B cell (primary cell): ENCODE measurements at regions of chr10 and their contacts with region 1.

Region 1: DNA sequence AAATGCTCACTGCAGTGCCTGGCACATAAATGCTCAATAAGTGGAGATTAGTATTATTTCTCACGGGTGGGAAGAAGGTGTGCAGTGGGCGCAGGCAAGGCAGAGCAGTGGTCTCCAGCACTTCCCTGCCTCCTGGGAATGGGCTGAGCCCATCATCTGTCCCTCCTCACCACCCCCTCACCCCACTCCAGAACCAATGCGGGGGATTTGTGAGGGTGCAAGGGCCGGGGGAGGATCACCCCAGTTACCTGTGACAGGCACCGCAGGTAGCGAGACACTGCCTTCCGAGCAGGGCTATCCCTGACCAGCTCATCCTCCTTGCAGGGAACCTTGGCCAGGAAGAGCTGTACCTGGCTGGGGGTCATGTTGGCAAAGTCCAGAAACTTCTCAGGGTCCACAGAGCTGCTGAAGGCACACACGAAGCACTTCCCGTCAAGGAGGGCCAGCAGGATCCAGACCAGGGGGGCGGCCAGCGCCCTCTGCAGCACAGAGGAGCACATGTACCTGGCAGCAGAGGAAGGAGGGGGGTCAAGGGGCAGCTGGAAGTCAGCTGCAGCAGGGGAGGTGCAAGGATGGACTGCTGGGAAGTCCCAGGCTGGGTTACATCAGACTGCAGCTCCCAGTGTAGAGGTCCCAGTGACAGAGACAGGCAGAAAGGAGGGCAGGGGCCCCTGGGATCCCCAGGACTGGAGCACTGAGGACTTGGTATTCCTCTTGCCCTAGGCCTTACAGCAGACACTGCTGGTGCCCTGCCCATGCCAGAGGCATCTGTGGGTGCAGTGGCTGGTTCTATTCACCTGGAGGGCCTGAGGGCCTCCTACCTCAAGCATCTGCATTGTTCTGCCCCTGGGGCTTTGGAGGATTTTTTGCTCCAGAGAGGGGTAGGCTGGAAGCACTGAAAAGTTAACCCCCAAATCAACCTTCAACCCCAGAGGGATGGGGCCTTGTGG is 2.7 kb downstream of the CALHM3 start:
- DNase-seq: peak; percentile 37
- ATAC-seq: no peak
- H3K4me3 ChIP-seq: no peak overlapping the region
- H3K4me3 Mint-ChIP-seq: no peak overlapping the region
- H3K27ac ChIP-seq: no peak overlapping the region
- H3K27ac Mint-ChIP-seq: no peak overlapping the region
- H3K4me1 ChIP-seq: peaks cover 19 to 34% of the 10 kb centered on the region in 2 donors
- H3K4me1 Mint-ChIP-seq: peaks cover 33% of the 10 kb centered on the region
- H3K27me3 ChIP-seq: no peaks in the 10 kb centered on the region
- H3K27me3 Mint-ChIP-seq: no peaks in the 10 kb centered on the region
- CTCF ChIP-seq: no peak

Region 2: DNA sequence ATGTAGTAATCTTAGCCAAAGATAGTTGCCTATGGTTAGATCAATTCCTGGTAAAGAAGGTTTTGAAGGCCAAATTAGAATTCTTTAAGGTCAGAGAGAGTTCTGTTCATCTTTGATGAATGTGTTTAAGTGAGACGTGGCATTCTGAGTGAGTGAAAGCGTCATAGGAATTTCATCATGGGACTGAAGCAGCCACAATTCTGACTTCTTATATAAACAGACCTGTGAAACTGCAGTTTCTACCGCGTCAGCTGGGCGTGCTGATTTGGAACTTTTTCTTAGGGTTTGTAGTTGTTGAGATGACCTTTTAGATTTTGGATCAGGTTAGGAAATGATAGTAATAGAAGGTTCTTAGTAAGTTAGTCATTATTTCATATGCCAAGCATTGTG is 454.4 kb before region 1 on chr10:
- CTCF ChIA-PET with region 1: no interaction called
- POLR2A ChIA-PET with region 1: no interaction called
- intact Hi-C with region 1: no loop called
- DNase-seq: no peak
- ATAC-seq: no peak
- H3K4me3 ChIP-seq: no peak overlapping the region
- H3K4me3 Mint-ChIP-seq: no peak overlapping the region
- H3K27ac ChIP-seq: no peak overlapping the region
- H3K27ac Mint-ChIP-seq: no peak overlapping the region
- H3K4me1 ChIP-seq: no peaks in the 10 kb centered on the region
- H3K4me1 Mint-ChIP-seq: peaks cover under 1% of the 10 kb centered on the region
- H3K27me3 ChIP-seq: no peaks in the 10 kb centered on the region
- H3K27me3 Mint-ChIP-seq: peaks cover 4% of the 10 kb centered on the region
- CTCF ChIP-seq: no peak

Region 3: DNA sequence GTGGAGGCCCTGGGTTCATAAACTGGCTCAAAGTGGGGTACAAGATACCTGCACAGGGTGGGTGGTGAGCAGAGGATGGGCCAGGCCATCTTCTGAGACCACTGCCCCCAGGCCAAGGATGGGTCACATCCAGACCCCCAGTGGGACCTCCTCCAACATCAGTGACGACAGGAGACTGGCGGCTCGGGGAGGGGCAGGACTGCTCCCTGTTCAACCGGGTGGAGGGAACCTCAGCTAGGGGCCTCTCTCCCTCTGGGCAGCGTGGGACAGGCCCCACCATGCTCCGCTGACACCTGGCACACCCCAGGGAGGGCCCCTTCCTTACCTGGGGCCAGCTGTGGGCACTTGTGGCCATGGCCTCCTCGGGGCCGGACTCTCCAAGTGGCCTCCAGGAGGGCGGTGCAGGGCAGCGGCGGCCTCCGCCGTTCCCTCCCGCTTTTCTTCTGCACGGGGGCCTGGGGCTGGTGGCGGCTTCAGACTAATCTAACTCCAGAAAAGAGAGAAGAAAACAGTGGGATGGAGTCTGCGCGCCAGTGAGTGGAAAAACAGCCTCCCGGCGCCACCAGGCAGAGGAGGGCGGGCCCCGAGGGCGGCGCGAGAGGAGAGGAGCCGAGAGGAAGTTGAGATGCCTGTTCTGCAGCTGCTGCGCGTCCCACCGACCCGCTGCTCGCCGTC is 24.4 kb before region 1 on chr10 and contains the start of gene CALHM2:
- CTCF ChIA-PET with region 1: interaction called, 32 read pairs
- POLR2A ChIA-PET with region 1: interaction called, 24 read pairs
- intact Hi-C with region 1: loop called (anchors 1 kb)
- DNase-seq: peak; percentile 65
- ATAC-seq: peak; percentile 86
- H3K4me3 ChIP-seq: peak within 1 kb of the TSS; percentile 22 to 91 (median 64)
- H3K4me3 Mint-ChIP-seq: peak within 1 kb of the TSS; percentile 93
- H3K27ac ChIP-seq: peak within 1 kb of the TSS; percentile 24 to 71
- H3K27ac Mint-ChIP-seq: peak within 1 kb of the TSS; percentile 91
- H3K4me1 ChIP-seq: peaks cover 20 to 39% of the 10 kb centered on the region in 2 donors
- H3K4me1 Mint-ChIP-seq: peaks cover 42% of the 10 kb centered on the region
- H3K27me3 ChIP-seq: peaks cover 0 to 6% (median 0%) of the 10 kb centered on the region in 4 experiments
- H3K27me3 Mint-ChIP-seq: no peaks in the 10 kb centered on the region
- CTCF ChIP-seq: no peak
- total RNA-seq, gene CALHM2: 42.8 and 46.2 TPM in 2 replicates

Region 4: DNA sequence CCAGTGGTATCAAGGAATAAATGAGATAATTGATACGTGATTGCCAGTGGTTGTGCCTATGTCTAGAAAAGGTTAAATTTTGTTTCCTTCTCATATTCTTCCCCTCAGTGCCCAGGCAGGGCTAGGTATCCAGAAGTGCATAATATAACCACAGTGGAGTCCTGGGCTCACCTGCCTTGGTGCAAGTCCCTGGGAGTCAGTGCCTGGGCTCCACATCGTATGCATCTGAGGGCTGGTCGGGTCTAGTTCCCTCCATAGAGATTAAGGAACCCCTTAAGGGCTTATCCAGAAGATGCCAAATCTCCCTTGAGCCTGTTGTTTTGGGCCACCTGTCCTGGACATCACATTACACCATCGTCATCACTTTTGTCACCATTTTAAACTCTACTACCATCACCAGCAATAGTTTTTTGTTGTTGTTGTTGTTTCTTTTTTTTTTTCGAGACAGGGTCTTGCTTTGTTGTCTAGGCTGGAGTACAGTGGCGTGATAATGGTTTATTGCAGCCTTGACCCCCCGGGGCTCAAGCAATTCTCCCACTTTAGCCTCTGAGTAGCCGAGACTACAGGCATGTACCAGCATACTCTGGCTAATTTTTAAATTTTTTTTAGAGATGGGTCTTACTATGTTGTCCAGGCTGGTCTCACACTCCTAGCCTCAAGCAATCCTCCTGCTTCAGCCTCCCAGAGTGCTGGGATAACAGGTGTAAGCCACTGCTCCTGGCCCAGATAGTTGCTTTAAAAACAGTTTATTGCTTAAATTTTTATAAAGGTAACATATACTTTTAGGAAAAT is 43.2 kb after region 1 on chr10:
- CTCF ChIA-PET with region 1: no interaction called
- POLR2A ChIA-PET with region 1: no interaction called
- intact Hi-C with region 1: no loop called
- DNase-seq: no peak
- ATAC-seq: no peak
- H3K4me3 ChIP-seq: no peak overlapping the region
- H3K4me3 Mint-ChIP-seq: no peak overlapping the region
- H3K27ac ChIP-seq: no peak overlapping the region
- H3K27ac Mint-ChIP-seq: no peak overlapping the region
- H3K4me1 ChIP-seq: peaks cover 0 to 7% of the 10 kb centered on the region in 2 donors
- H3K4me1 Mint-ChIP-seq: peaks cover 8% of the 10 kb centered on the region
- H3K27me3 ChIP-seq: no peaks in the 10 kb centered on the region
- H3K27me3 Mint-ChIP-seq: peaks cover 12% of the 10 kb centered on the region
- CTCF ChIP-seq: no peak